Activated CD4-positive, alpha-beta T cell treated with anti-CD3 and anti-CD28 coated beads for 36 hours (primary cell): ENCODE measurements at regions of chr20 and their contacts with region 1.

Region 1: DNA sequence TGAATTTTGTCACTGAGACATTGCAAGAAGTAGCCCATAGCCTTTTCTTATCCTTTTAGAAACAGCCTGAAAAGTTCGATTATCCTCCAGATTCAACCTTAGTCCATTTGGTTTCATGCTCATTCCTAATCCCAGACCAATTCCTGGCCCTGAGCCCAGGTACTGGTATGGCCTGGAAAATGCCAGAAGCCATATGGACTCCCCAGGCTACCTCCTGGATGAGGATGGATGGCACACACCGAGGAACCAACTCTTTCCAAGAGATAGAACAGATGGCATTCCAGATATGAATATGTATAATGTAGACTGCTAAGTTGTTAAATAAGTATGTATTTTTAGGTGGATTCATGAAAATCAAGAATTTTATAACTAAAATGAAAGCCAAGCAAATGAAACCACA is 51.6 kb upstream of the SNAP25 start:
- DNase-seq: no peak
- ATAC-seq: no peak
- H3K4me3 Mint-ChIP-seq: no peak overlapping the region
- H3K27ac Mint-ChIP-seq: no peak overlapping the region
- H3K4me1 Mint-ChIP-seq: no peaks in the 10 kb centered on the region
- H3K27me3 Mint-ChIP-seq: peaks cover 11% of the 10 kb centered on the region

Region 2: GRCh38 chr20:10119331-10119730 is 47.7 kb before region 1 on chr20:
- CTCF ChIA-PET with region 1: no interaction called
- POLR2A ChIA-PET with region 1: no interaction called
- intact Hi-C with region 1: loop called in 1 of 2 experiments (anchors 2 kb)
- DNase-seq: no peak
- ATAC-seq: no peak
- H3K4me3 Mint-ChIP-seq: no peak overlapping the region
- H3K27ac Mint-ChIP-seq: no peak overlapping the region
- H3K4me1 Mint-ChIP-seq: peaks cover 12% of the 10 kb centered on the region
- H3K27me3 Mint-ChIP-seq: peaks cover 5% of the 10 kb centered on the region